MCF 10A (cell line): ENCODE measurements at regions of chr2 and their contacts with region 1.

Region 1: DNA sequence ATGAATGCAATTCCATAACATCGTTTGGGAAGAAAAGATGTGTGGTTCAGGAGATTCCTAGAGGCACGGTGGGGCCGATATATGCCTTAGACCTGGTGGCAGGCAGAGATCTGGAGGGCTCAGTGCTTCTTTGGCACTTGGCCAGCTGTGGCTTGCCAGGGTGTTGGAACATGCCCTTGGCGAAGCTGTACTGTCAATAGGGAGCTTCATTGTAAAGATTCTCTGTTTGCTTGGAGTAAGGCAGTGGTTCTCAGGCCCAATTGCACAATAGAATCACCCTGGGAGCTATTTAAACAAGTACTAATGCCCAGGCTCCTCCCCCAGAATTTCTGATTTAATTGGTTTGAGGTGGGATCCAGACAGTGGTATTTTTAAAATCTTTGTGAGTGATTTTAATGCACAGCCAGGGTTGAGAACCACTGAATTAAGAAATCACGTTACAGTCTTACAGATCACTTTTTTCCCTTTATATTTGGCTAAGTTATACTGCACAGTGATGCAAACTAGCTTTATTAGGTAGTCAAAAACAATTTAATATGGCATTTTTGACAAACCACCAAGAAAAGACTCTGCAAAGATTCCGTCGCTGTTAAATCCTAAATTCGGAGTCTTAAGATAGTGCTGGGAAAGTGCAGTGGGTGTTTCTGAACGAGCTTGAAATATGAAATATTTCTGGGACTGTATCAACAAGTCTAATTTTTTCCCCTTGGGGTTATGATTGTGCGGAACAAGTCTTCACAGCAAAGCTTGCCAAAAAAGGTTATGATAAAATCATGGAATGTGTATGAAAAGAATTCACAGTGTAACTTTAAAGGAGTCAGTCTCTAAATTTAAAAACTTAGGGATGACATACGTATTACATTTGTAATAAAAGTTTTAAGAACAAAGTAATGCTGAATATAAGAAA is 78.0 kb downstream of the CRIM1 start:
- DNase-seq: peak; percentile 92
- H3K4me3 Mint-ChIP-seq: peak overlapping the region; percentile 10
- H3K27ac Mint-ChIP-seq: peak overlapping the region; percentile 54
- H3K4me1 Mint-ChIP-seq: peaks cover 46% of the 10 kb centered on the region
- H3K27me3 Mint-ChIP-seq: no peaks in the 10 kb centered on the region
- CTCF ChIP-seq: no peak

Region 2: GRCh38 chr2:36338817-36339125 is 94.8 kb before region 1 on chr2:
- CTCF ChIA-PET with region 1: no interaction called
- POLR2A ChIA-PET with region 1: no interaction called
- intact Hi-C with region 1: no loop called
- DNase-seq: no peak
- H3K4me3 Mint-ChIP-seq: no peak overlapping the region
- H3K27ac Mint-ChIP-seq: no peak overlapping the region
- H3K4me1 Mint-ChIP-seq: peaks cover 8% of the 10 kb centered on the region
- H3K27me3 Mint-ChIP-seq: peaks cover 18% of the 10 kb centered on the region
- CTCF ChIP-seq: no peak

Region 3: GRCh38 chr2:36376319-36376765 is 57.2 kb before region 1 on chr2:
- CTCF ChIA-PET with region 1: interaction called, 10 read pairs
- POLR2A ChIA-PET with region 1: interaction called, 183 read pairs
- intact Hi-C with region 1: loop called (anchors 1 kb)
- DNase-seq: peak; percentile 75
- H3K4me3 Mint-ChIP-seq: peak overlapping the region; percentile 34
- H3K27ac Mint-ChIP-seq: peak overlapping the region; percentile 78
- H3K4me1 Mint-ChIP-seq: peaks cover 72% of the 10 kb centered on the region
- H3K27me3 Mint-ChIP-seq: no peaks in the 10 kb centered on the region
- CTCF ChIP-seq: no peak

Region 4: GRCh38 chr2:36411962-36412444 is 21.6 kb before region 1 on chr2:
- CTCF ChIA-PET with region 1: interaction called, 4 read pairs
- POLR2A ChIA-PET with region 1: interaction called, 16 read pairs
- intact Hi-C with region 1: no loop called
- DNase-seq: no peak
- H3K4me3 Mint-ChIP-seq: no peak overlapping the region
- H3K27ac Mint-ChIP-seq: peak overlapping the region; percentile 66
- H3K4me1 Mint-ChIP-seq: peaks cover 46% of the 10 kb centered on the region
- H3K27me3 Mint-ChIP-seq: no peaks in the 10 kb centered on the region
- CTCF ChIP-seq: no peak

Region 5: DNA sequence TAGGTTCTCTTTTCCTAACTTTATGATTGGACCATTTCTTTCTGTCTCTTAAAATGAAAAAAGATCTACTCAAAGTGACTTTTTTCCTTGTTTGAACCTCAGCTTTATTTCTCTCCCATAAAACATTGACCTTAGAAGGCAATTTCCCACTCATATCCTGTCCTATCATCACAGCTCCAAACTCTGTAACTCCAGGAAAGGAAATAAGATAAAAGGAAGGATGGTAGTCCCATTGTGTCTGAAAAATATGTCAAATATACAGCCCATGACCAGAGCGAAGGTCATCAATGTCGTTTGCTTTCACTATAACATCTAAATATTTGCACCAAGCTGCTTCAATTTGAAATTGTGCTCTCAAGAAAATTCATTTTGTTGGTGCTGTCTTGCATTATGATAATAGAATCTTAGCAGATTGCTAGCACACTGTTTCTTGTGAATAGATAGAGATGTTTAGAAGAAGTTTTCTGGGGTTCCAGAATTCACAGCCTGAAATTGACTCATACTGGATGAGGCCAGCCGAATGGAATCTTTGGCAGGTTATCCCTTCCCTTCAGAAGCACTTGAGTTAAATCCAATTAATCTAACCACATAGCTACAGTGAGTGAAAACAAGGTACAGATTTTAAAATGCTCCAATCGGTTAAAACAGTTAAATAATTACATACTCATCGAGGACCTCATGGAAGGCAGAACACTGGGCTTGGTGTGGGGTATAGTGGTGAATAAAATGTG is 17.1 kb after region 1 on chr2:
- CTCF ChIA-PET with region 1: interaction called, 6 read pairs
- POLR2A ChIA-PET with region 1: interaction called, 13 read pairs
- intact Hi-C with region 1: no loop called
- DNase-seq: peak; percentile 59
- H3K4me3 Mint-ChIP-seq: no peak overlapping the region
- H3K27ac Mint-ChIP-seq: peak overlapping the region; percentile 5
- H3K4me1 Mint-ChIP-seq: peaks cover 37% of the 10 kb centered on the region
- H3K27me3 Mint-ChIP-seq: no peaks in the 10 kb centered on the region
- CTCF ChIP-seq: no peak

Region 6: GRCh38 chr2:36486546-36487044 is 53.0 kb after region 1 on chr2:
- CTCF ChIA-PET with region 1: interaction called, 4 read pairs
- POLR2A ChIA-PET with region 1: interaction called, 6 read pairs
- intact Hi-C with region 1: loop called (anchors 2 kb)
- DNase-seq: peak; percentile 50
- H3K4me3 Mint-ChIP-seq: peak overlapping the region; percentile 20
- H3K27ac Mint-ChIP-seq: peak overlapping the region; percentile 61
- H3K4me1 Mint-ChIP-seq: peaks cover 51% of the 10 kb centered on the region
- H3K27me3 Mint-ChIP-seq: no peaks in the 10 kb centered on the region
- CTCF ChIP-seq: no peak